T-cell (primary cell): ENCODE measurements at regions of chr4 and their contacts with region 1.

Region 1: GRCh38 chr4:142142366-142143054 is 506.1 kb downstream of the IL15 start:
- DNase-seq: no peak
- ATAC-seq: no peak
- H3K4me3 ChIP-seq: no peak overlapping the region
- H3K4me3 Mint-ChIP-seq: no peak overlapping the region
- H3K27ac ChIP-seq: peak overlapping the region; percentile 29
- H3K27ac Mint-ChIP-seq: peak overlapping the region; percentile 94 to 95
- H3K4me1 ChIP-seq: no peaks in the 10 kb centered on the region
- H3K4me1 Mint-ChIP-seq: peaks cover 32 to 41% (median 33%) of the 10 kb centered on the region in 3 donors
- H3K27me3 ChIP-seq: no peaks in the 10 kb centered on the region
- H3K27me3 Mint-ChIP-seq: no peaks in the 10 kb centered on the region

Region 2: GRCh38 chr4:140800666-140801065 is 1341.8 kb before region 1 on chr4:
- CTCF ChIA-PET with region 1: no interaction called
- POLR2A ChIA-PET with region 1: interaction called in 1 of 2 experiments, 11 read pairs
- DNase-seq: no peak
- ATAC-seq: no peak
- H3K4me3 ChIP-seq: no peak overlapping the region
- H3K4me3 Mint-ChIP-seq: no peak overlapping the region
- H3K27ac ChIP-seq: no peak overlapping the region
- H3K27ac Mint-ChIP-seq: no peak overlapping the region
- H3K4me1 ChIP-seq: no peaks in the 10 kb centered on the region
- H3K4me1 Mint-ChIP-seq: peaks cover 0 to 6% (median 0%) of the 10 kb centered on the region in 3 donors
- H3K27me3 ChIP-seq: no peaks in the 10 kb centered on the region
- H3K27me3 Mint-ChIP-seq: peaks cover 10 to 15% of the 10 kb centered on the region in 2 donors

Region 3: DNA sequence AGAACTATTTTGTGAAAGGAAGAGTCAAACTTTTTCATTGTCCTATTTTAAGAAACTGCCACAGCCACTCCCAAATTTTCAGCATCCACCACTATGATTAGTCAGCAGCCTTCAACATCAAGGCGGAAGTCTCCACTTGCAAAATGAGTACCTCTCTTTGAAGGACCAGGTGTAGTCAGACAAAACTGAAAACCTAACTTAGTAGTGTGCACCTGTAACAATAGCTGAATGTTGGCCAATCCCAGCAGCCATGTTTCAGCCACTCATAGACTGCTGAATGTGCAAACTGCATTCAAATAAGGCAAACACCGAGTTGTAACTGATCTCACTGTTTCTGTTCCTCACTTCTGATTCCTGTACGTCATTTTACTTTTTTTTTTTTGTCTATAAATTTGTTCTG is 165.1 kb before region 1 on chr4:
- CTCF ChIA-PET with region 1: no interaction called
- POLR2A ChIA-PET with region 1: no interaction called
- DNase-seq: no peak
- ATAC-seq: no peak
- H3K4me3 ChIP-seq: no peak overlapping the region
- H3K4me3 Mint-ChIP-seq: no peak overlapping the region
- H3K27ac ChIP-seq: no peak overlapping the region
- H3K27ac Mint-ChIP-seq: no peak overlapping the region
- H3K4me1 ChIP-seq: no peaks in the 10 kb centered on the region
- H3K4me1 Mint-ChIP-seq: no peaks in the 10 kb centered on the region
- H3K27me3 ChIP-seq: no peaks in the 10 kb centered on the region
- H3K27me3 Mint-ChIP-seq: peaks cover 3 to 7% of the 10 kb centered on the region in 2 donors